ENCODE measurements at regions of chr6 and their contacts with region 1.

Region 1: DNA sequence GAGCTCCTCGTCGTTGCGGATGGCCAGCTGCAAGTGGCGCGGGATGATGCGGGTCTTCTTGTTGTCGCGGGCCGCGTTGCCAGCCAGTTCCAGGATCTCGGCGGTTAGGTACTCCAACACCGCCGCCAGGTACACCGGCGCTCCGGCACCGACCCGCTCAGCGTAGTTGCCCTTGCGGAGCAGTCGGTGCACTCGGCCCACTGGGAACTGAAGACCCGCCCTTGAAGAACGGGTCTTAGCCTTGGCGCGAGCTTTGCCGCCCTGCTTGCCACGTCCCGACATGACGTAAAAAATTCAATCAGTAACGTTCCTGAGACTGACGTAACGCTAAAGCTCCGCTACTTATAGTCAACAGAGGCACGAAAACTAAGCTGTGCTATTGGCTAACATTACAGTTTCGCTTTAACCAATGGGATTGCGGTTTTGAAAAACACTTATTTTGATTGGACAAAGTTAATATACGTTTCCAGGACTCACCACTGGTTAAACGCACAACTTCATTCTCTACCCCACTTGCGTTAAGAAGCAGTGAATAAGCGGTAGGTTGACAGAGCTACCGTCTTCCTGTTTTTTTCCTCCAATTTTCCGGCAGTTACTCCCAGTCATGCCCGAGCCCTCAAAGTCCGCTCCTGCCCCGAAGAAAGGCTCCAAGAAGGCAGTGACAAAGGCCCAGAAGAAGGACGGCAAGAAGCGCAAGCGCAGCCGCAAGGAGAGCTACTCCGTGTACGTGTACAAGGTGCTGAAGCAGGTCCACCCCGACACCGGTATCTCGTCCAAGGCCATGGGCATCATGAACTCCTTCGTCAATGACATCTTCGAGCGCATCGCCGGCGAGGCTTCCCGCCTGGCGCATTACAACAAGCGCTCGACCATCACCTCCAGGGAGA is 73.9 kb downstream of the OR2B2 start:
- DNase-seq: peak; percentile 65 to 96 (median 93)
- ATAC-seq: peak; percentile 86
- H3K4me3 ChIP-seq: peak overlapping the region; percentile 87
- H3K4me3 Mint-ChIP-seq: no peak overlapping the region
- H3K27ac ChIP-seq: peak overlapping the region; percentile 93
- H3K27ac Mint-ChIP-seq: no peak overlapping the region
- H3K4me1 ChIP-seq: peaks cover 22 to 34% of the 10 kb centered on the region in 2 donors
- H3K4me1 Mint-ChIP-seq: peaks cover 7 to 39% (median 29%) of the 10 kb centered on the region in 7 donors
- H3K27me3 ChIP-seq: no peaks in the 10 kb centered on the region
- H3K27me3 Mint-ChIP-seq: peaks cover 0 to 14% (median 7%) of the 10 kb centered on the region in 5 donors

Region 2: DNA sequence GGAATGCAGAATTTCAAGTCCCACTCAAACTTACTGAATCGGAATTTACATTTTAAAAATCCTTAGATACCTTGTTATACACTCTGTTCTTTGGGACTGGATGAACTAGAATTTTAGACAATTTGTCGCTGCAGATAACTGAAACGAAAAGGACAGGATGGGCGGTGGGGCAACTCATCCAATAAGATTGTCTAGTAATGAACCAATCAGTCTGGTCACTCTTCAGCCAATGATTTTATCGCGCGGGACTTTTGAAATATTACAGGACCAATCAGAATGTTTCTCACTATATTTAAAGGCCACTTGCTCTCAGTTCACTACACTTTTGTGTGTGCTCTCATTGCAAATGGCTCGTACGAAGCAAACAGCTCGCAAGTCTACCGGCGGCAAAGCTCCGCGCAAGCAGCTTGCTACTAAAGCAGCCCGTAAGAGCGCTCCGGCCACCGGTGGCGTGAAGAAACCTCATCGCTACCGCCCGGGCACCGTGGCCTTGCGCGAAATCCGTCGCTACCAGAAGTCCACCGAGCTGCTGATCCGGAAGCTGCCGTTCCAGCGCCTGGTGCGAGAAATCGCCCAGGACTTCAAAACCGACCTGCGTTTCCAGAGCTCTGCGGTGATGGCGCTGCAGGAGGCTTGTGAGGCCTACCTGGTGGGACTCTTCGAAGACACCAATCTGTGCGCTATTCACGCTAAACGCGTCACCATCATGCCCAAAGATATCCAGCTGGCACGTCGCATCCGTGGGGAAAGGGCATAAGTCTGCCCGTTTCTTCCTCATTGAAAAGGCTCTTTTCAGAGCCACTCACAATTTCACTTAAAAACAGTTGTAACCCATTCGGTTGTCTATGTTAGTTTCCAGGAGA is 1793.0 kb before region 1 on chr6:
- CTCF ChIA-PET with region 1: no interaction called
- POLR2A ChIA-PET with region 1: interaction called, 67 read pairs
- intact Hi-C with region 1: no loop called
- DNase-seq: peak; percentile 39 to 93 (median 89)
- ATAC-seq: peak; percentile 68
- H3K4me3 ChIP-seq: peak overlapping the region; percentile 91
- H3K4me3 Mint-ChIP-seq: peak overlapping the region; percentile 87 to 98 (median 94)
- H3K27ac ChIP-seq: peak overlapping the region; percentile 90
- H3K27ac Mint-ChIP-seq: peak overlapping the region; percentile 80 to 98 (median 95)
- H3K4me1 ChIP-seq: peaks cover 7 to 19% of the 10 kb centered on the region in 2 donors
- H3K4me1 Mint-ChIP-seq: peaks cover 8 to 51% (median 20%) of the 10 kb centered on the region in 7 donors
- H3K27me3 ChIP-seq: no peaks in the 10 kb centered on the region
- H3K27me3 Mint-ChIP-seq: peaks cover 0 to 3% (median 0%) of the 10 kb centered on the region in 5 donors

Region 3: DNA sequence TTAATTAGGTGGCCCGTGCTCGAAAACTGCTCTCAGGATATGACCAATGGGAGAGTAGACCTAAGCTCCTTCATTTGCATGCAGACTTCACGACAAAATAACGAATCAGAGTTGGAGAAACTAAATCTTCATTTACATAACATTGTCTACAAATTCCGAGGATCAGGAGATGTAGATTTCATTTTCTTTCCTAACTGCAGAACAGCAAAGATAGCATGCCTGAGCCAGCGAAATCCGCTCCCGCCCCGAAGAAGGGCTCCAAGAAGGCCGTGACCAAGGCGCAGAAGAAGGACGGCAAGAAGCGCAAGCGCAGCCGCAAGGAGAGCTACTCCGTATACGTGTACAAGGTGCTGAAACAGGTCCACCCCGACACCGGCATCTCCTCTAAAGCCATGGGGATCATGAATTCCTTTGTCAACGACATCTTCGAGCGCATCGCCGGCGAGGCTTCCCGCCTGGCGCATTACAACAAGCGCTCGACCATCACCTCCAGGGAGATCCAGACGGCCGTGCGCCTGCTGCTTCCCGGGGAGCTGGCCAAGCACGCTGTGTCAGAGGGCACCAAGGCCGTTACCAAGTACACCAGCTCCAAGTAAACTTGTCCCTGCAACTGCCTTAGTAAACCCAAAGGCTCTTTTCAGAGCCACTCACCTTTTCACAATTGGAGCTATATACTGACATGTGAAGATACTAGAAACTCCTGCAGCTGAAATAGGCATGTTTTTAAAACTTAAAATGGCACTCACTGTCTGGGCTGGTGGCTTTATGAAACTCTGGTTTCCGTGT is 1654.5 kb before region 1 on chr6:
- CTCF ChIA-PET with region 1: no interaction called
- POLR2A ChIA-PET with region 1: interaction called, 13 read pairs
- intact Hi-C with region 1: no loop called
- DNase-seq: peak; percentile 43 to 83 (median 77)
- ATAC-seq: peak; percentile 91
- H3K4me3 ChIP-seq: peak overlapping the region; percentile 82
- H3K4me3 Mint-ChIP-seq: peak overlapping the region; percentile 84 to 99 (median 98)
- H3K27ac ChIP-seq: peak overlapping the region; percentile 76
- H3K27ac Mint-ChIP-seq: peak overlapping the region; percentile 83 to 99 (median 90)
- H3K4me1 ChIP-seq: peaks cover 13 to 30% of the 10 kb centered on the region in 2 donors
- H3K4me1 Mint-ChIP-seq: peaks cover 19 to 59% (median 49%) of the 10 kb centered on the region in 7 donors
- H3K27me3 ChIP-seq: no peaks in the 10 kb centered on the region
- H3K27me3 Mint-ChIP-seq: no peaks in the 10 kb centered on the region

Region 4: DNA sequence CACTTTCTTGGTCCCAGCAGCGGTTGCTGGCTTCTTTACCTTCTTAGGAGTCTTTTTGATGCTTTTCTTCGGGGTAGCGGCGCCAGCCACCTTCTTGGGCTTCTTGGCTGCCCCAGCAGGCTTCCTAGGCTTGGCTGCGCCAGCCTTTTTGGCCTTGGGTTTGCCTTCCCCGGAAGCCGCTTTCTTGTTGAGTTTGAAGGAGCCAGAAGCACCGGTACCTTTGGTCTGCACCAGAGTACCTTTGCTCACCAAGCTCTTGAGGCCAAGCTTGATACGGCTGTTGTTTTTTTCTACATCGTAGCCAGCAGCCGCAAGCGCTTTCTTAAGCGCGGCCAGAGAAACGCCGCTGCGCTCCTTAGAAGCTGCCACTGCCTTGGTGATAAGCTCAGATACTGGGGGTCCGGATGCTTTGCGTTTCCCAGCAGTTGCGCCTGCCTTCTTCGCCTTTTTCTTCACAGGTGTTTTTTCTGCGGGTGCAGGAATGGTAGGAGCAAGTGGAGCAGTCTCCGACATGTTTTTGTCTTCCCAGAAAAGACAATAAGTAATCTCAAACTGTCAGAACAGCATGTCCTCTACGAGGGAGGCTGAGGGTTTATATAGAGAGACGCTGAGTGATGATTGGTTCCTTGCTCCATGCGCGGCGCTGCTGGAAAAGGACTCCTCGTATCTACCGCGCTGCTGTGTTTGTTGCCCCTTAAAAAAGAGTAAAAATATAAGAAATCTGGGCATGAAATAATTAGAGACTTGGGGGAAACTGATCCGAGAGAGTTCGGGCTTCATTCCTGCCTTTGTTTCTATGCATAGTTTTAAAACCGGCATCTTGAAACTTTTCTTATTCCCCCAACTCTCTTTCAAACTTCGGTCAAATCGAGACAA is 1603.6 kb before region 1 on chr6:
- CTCF ChIA-PET with region 1: no interaction called
- POLR2A ChIA-PET with region 1: interaction called, 66 read pairs
- intact Hi-C with region 1: no loop called
- DNase-seq: peak; percentile 48 to 94 (median 85)
- ATAC-seq: peak; percentile 80
- H3K4me3 ChIP-seq: peak overlapping the region; percentile 93
- H3K4me3 Mint-ChIP-seq: peak overlapping the region; percentile 87 to 99 (median 94)
- H3K27ac ChIP-seq: peak overlapping the region; percentile 87
- H3K27ac Mint-ChIP-seq: peak overlapping the region; percentile 93 to 100 (median 98)
- H3K4me1 ChIP-seq: peaks cover under 1 to 18% of the 10 kb centered on the region in 2 donors
- H3K4me1 Mint-ChIP-seq: peaks cover 18 to 52% (median 38%) of the 10 kb centered on the region in 7 donors
- H3K27me3 ChIP-seq: no peaks in the 10 kb centered on the region
- H3K27me3 Mint-ChIP-seq: peaks cover 0 to 15% (median 0%) of the 10 kb centered on the region in 5 donors

Region 5: DNA sequence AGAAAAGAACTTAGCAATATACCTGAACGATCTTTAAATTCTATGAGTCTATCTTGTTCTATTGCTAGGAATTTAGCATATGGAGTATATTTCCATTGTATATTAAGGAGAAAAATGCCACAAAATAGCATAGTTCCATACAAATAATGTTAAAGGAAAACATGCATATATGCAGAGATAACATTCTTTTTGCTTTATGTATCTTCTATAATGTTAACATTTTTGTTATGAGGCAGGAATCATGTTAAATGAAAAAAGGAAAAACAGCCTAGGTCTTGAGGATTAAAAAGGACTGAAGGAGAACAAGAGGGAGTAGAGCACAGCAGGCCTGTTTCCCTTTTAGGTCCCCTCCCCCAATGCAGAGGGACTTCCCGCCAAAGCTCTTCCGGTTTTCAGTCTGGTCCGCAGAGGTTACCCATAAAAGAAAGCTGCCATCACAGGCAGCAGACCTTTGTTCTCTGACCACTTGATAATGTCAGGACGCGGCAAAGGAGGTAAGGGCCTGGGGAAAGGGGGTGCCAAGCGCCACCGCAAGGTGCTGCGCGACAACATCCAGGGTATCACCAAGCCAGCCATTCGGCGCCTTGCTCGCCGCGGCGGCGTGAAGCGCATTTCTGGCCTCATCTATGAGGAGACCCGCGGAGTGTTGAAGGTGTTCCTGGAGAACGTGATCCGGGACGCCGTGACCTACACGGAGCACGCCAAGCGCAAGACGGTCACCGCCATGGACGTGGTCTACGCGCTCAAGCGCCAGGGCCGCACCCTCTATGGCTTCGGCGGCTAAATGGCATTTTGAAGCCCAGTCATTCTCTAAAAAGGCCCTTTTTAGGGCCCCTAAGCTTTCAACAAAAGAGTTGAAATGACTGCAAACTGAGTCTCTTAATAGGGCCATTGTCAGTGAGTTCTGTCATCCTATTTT is 699.2 kb before region 1 on chr6:
- CTCF ChIA-PET with region 1: interaction called, 3 read pairs
- POLR2A ChIA-PET with region 1: interaction called, 89 read pairs
- intact Hi-C with region 1: no loop called
- DNase-seq: peak; percentile 39 to 78 (median 67)
- ATAC-seq: peak; percentile 90
- H3K4me3 ChIP-seq: peak overlapping the region; percentile 74
- H3K4me3 Mint-ChIP-seq: peak overlapping the region; percentile 90 to 99 (median 98)
- H3K27ac ChIP-seq: peak overlapping the region; percentile 86
- H3K27ac Mint-ChIP-seq: peak overlapping the region; percentile 97 to 99 (median 98)
- H3K4me1 ChIP-seq: peaks cover 19 to 26% of the 10 kb centered on the region in 2 donors
- H3K4me1 Mint-ChIP-seq: peaks cover 29 to 80% (median 60%) of the 10 kb centered on the region in 7 donors
- H3K27me3 ChIP-seq: no peaks in the 10 kb centered on the region
- H3K27me3 Mint-ChIP-seq: no peaks in the 10 kb centered on the region

Region 6: DNA sequence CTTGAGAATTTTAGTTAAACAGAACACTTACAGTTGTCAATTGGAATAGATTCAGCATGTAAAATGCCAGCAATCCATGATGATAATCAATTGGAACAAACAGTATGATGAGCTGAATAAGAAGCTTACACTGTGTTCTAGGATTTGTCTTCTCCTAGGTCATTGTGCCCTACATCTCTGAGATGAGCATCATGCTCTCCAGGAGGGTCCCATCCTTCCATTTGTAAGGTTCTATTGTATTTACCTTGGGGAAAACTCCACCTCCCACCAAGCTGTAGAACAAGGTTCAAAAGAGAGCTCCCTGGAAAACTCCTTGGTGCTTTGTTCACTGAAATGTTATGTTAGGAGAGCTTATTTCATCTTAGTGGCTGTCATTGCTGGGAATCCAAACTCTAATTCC is 13.1 kb after region 1 on chr6:
- CTCF ChIA-PET with region 1: no interaction called
- POLR2A ChIA-PET with region 1: interaction called, 40 read pairs
- intact Hi-C with region 1: no loop called
- DNase-seq: no peak
- ATAC-seq: no peak
- H3K4me3 ChIP-seq: no peak overlapping the region
- H3K4me3 Mint-ChIP-seq: no peak overlapping the region
- H3K27ac ChIP-seq: no peak overlapping the region
- H3K27ac Mint-ChIP-seq: no peak overlapping the region
- H3K4me1 ChIP-seq: no peaks in the 10 kb centered on the region
- H3K4me1 Mint-ChIP-seq: peaks cover 0 to 5% (median 0%) of the 10 kb centered on the region in 7 donors
- H3K27me3 ChIP-seq: no peaks in the 10 kb centered on the region
- H3K27me3 Mint-ChIP-seq: peaks cover 0 to 29% (median 4%) of the 10 kb centered on the region in 5 donors

Region 7: GRCh38 chr6:28011722-28012121 is 173.4 kb after region 1 on chr6:
- CTCF ChIA-PET with region 1: no interaction called
- POLR2A ChIA-PET with region 1: no interaction called
- intact Hi-C with region 1: no loop called
- DNase-seq: no peak
- ATAC-seq: no peak
- H3K4me3 ChIP-seq: no peak overlapping the region
- H3K4me3 Mint-ChIP-seq: peak overlapping the region in 2 of 10 donors; percentile 1 to 27
- H3K27ac ChIP-seq: no peak overlapping the region
- H3K27ac Mint-ChIP-seq: peak overlapping the region in 1 of 9 donors; percentile 14
- H3K4me1 ChIP-seq: peaks cover 0 to 5% of the 10 kb centered on the region in 2 donors
- H3K4me1 Mint-ChIP-seq: peaks cover 0 to 18% (median 13%) of the 10 kb centered on the region in 7 donors
- H3K27me3 ChIP-seq: no peaks in the 10 kb centered on the region
- H3K27me3 Mint-ChIP-seq: peaks cover 13 to 47% (median 29%) of the 10 kb centered on the region in 5 donors

Region 8: DNA sequence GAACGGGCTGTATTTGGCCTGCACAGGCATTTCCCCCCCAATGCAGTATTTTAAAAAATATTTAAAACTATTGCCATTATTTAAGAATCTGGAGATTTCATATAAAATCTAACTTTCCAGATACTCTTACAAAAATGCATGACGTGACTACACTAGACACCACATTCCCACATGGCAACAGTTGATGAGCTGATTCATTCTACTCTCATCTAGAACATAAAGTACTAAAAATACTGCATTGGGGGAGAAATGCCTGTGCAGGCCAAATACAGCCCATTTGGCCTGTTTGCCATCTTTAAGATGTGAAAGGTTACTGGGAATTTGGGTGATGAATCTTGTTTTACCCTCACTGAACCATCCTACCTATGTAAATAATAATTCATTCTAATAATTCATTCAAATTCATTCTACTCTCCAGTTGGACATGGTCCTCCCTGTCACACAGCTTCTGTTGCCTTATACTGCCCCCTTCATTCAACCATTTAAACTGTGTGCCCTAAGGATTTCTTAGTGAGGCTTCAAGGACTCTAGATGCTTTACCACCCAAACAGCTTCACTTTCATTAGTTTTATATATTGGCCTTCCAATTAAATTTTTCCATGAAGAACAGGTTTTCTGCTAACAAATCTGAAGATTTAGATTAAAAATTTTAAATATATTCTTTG is 279.2 kb after region 1 on chr6:
- CTCF ChIA-PET with region 1: no interaction called
- POLR2A ChIA-PET with region 1: no interaction called
- intact Hi-C with region 1: no loop called
- DNase-seq: no peak
- ATAC-seq: no peak
- H3K4me3 ChIP-seq: no peak overlapping the region
- H3K4me3 Mint-ChIP-seq: no peak overlapping the region
- H3K27ac ChIP-seq: no peak overlapping the region
- H3K27ac Mint-ChIP-seq: no peak overlapping the region
- H3K4me1 ChIP-seq: no peaks in the 10 kb centered on the region
- H3K4me1 Mint-ChIP-seq: peaks cover 0 to 4% (median 0%) of the 10 kb centered on the region in 7 donors
- H3K27me3 ChIP-seq: no peaks in the 10 kb centered on the region
- H3K27me3 Mint-ChIP-seq: no peaks in the 10 kb centered on the region

Region 9: GRCh38 chr6:28863604-28864320 is 1025.5 kb after region 1 on chr6:
- CTCF ChIA-PET with region 1: no interaction called
- POLR2A ChIA-PET with region 1: interaction called, 8 read pairs
- intact Hi-C with region 1: loop called (anchors 10 kb)
- DNase-seq: peak; percentile 60 to 93 (median 89)
- ATAC-seq: peak; percentile 64
- H3K4me3 ChIP-seq: peak overlapping the region; percentile 95
- H3K4me3 Mint-ChIP-seq: peak overlapping the region; percentile 90 to 98 (median 92)
- H3K27ac ChIP-seq: peak overlapping the region; percentile 75
- H3K27ac Mint-ChIP-seq: peak overlapping the region; percentile 89 to 100 (median 95)
- H3K4me1 ChIP-seq: peaks cover 11 to 18% of the 10 kb centered on the region in 2 donors
- H3K4me1 Mint-ChIP-seq: peaks cover 15 to 69% (median 53%) of the 10 kb centered on the region in 7 donors
- H3K27me3 ChIP-seq: no peaks in the 10 kb centered on the region
- H3K27me3 Mint-ChIP-seq: peaks cover 0 to 30% (median 4%) of the 10 kb centered on the region in 5 donors

Measured in naive thymus-derived CD4-positive, alpha-beta T cell (primary cell).